Calu3 (cell line): ENCODE measurements at regions of chr5 and their contacts with region 1.

Region 1: DNA sequence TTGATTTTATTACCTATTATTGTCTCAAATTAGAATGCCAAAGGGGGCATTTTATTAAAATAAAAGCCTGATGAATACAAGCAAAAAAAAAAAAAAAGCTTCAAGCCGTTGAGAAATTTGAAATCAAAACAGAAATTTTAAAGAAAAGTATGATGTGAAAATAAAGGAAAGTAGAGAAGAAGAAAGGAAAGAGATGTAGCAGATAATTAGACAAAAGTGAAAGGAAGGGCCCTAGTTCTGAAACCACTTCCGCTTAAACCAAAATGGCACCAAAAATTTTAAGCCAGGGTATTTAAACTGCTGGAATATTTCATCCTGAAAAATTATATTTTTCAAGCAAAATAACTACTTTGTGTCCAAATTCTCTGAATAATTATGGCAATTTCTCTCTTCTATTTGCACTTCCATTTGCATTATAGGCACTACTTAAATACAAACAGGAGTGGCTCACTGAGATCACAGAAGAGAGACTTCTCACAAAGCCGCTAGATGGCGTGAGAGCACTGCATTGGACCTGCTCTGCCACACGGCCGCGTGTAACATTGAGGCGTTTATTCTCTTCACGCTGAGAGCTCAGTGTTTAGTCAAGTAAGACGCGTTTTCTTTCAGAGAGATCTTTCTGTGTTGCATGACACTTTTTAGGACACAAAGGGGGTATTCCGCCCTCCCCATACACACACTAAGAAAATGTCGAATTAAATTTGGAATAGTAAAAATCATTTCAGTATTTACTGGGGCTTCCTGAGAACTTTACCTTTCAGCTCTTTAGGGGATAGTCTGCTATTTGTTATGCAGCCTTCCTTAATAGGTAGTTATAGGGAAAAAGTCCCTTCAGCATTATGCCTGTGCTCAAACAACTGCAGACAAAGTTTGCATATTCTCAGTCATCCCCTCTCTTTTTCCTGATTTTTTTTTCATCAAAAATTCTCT is 368.4 kb upstream of the CCNH start:
- DNase-seq: peak; percentile 83
- H3K4me3 Mint-ChIP-seq: no peak overlapping the region
- H3K27ac Mint-ChIP-seq: no peak overlapping the region
- H3K4me1 Mint-ChIP-seq: peaks cover 26% of the 10 kb centered on the region
- H3K27me3 Mint-ChIP-seq: no peaks in the 10 kb centered on the region
- CTCF ChIP-seq: peak; percentile 90

Region 2: GRCh38 chr5:87421307-87421706 is 359.8 kb before region 1 on chr5:
- CTCF ChIA-PET with region 1: no interaction called
- intact Hi-C with region 1: loop called (anchors 1 kb)
- DNase-seq: no peak
- H3K4me3 Mint-ChIP-seq: no peak overlapping the region
- H3K27ac Mint-ChIP-seq: no peak overlapping the region
- H3K4me1 Mint-ChIP-seq: peaks cover 9% of the 10 kb centered on the region
- H3K27me3 Mint-ChIP-seq: no peaks in the 10 kb centered on the region
- CTCF ChIP-seq: no peak

Region 3: DNA sequence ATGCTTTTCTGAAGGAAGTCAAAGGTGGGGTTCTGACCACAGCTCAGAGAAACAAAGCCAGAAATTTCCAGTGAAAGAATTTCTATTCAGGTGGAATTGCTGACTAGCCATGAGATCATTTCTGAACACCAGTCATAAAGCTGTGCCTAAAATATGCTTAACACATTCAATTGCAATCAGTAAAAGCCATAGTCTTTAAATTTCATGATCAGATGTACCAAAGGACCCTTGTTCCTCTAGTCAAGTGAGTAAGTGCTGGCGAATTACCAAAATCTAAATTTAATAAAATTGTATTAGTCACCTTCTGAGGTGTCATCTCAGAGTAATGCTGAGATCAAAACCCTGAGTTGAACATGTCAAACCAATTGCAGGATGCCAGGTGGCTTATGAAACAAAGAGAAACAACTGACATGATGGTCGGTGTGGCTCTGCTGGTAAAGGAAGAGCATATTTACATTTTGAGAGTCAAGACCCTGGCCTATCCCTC is 34.2 kb before region 1 on chr5:
- CTCF ChIA-PET with region 1: no interaction called
- intact Hi-C with region 1: no loop called
- DNase-seq: no peak
- H3K4me3 Mint-ChIP-seq: no peak overlapping the region
- H3K27ac Mint-ChIP-seq: no peak overlapping the region
- H3K4me1 Mint-ChIP-seq: peaks cover 4% of the 10 kb centered on the region
- H3K27me3 Mint-ChIP-seq: no peaks in the 10 kb centered on the region
- CTCF ChIP-seq: no peak

Region 4: GRCh38 chr5:88140856-88141752 is 360.0 kb after region 1 on chr5:
- CTCF ChIA-PET with region 1: interaction called, 10 read pairs
- intact Hi-C with region 1: loop called (anchors 5 kb)
- DNase-seq: peak; percentile 99
- H3K4me3 Mint-ChIP-seq: no peak overlapping the region
- H3K27ac Mint-ChIP-seq: no peak overlapping the region
- H3K4me1 Mint-ChIP-seq: peaks cover 9% of the 10 kb centered on the region
- H3K27me3 Mint-ChIP-seq: no peaks in the 10 kb centered on the region
- CTCF ChIP-seq: peak; percentile 84

Region 5: GRCh38 chr5:88680253-88681132 is 899.4 kb after region 1 on chr5:
- CTCF ChIA-PET with region 1: interaction called, 8 read pairs
- intact Hi-C with region 1: loop called (anchors 1 kb)
- DNase-seq: peak; percentile 96
- H3K4me3 Mint-ChIP-seq: peak overlapping the region; percentile 65
- H3K27ac Mint-ChIP-seq: no peak overlapping the region
- H3K4me1 Mint-ChIP-seq: peaks cover 22% of the 10 kb centered on the region
- H3K27me3 Mint-ChIP-seq: peaks cover 12% of the 10 kb centered on the region
- CTCF ChIP-seq: peak; percentile 99

Region 6: GRCh38 chr5:88724201-88724600 is 943.1 kb after region 1 on chr5:
- CTCF ChIA-PET with region 1: interaction called, 44 read pairs
- intact Hi-C with region 1: loop called (anchors 1 kb)
- DNase-seq: no peak
- H3K4me3 Mint-ChIP-seq: no peak overlapping the region
- H3K27ac Mint-ChIP-seq: no peak overlapping the region
- H3K4me1 Mint-ChIP-seq: no peaks in the 10 kb centered on the region
- H3K27me3 Mint-ChIP-seq: no peaks in the 10 kb centered on the region
- CTCF ChIP-seq: peak; percentile 43